ENCODE measurements at regions of chr9 and their contacts with region 1.

Region 1: GRCh38 chr9:7055201-7055903 is 297.6 kb downstream of the KDM4C start:
- DNase-seq: no peak
- CTCF ChIP-seq: no peak

Region 2: GRCh38 chr9:6467006-6467625 is 588.2 kb before region 1 on chr9:
- in situ Hi-C with region 1: no loop called
- DNase-seq: no peak
- CTCF ChIP-seq: no peak

Region 3: GRCh38 chr9:7234143-7234542 is 178.8 kb after region 1 on chr9:
- in situ Hi-C with region 1: loop called (anchors 10 kb)
- DNase-seq: peak; percentile 29
- CTCF ChIP-seq: peak; percentile 50